Naive thymus-derived CD4-positive, alpha-beta T cell (primary cell): ENCODE measurements at regions of chr7 and their contacts with region 1.

Region 1: GRCh38 chr7:74355091-74355490 is 65.9 kb downstream of the CLIP2 start:
- DNase-seq: no peak
- ATAC-seq: no peak
- H3K4me3 ChIP-seq: no peak overlapping the region
- H3K4me3 Mint-ChIP-seq: no peak overlapping the region
- H3K27ac ChIP-seq: no peak overlapping the region
- H3K27ac Mint-ChIP-seq: no peak overlapping the region
- H3K4me1 ChIP-seq: no peaks in the 10 kb centered on the region
- H3K4me1 Mint-ChIP-seq: no peaks in the 10 kb centered on the region
- H3K27me3 ChIP-seq: no peaks in the 10 kb centered on the region
- H3K27me3 Mint-ChIP-seq: no peaks in the 10 kb centered on the region

Region 2: GRCh38 chr7:74306730-74307469 is 48.2 kb before region 1 on chr7:
- CTCF ChIA-PET with region 1: no interaction called
- POLR2A ChIA-PET with region 1: no interaction called
- intact Hi-C with region 1: loop called in 1 of 2 experiments (anchors 10 kb)
- DNase-seq: no peak
- ATAC-seq: no peak
- H3K4me3 ChIP-seq: no peak overlapping the region
- H3K4me3 Mint-ChIP-seq: peak overlapping the region; percentile 12 to 77 (median 57)
- H3K27ac ChIP-seq: no peak overlapping the region
- H3K27ac Mint-ChIP-seq: peak overlapping the region in 1 of 9 donors; percentile 31
- H3K4me1 ChIP-seq: peaks cover 3 to 13% of the 10 kb centered on the region in 2 donors
- H3K4me1 Mint-ChIP-seq: peaks cover 6 to 12% (median 11%) of the 10 kb centered on the region in 7 donors
- H3K27me3 ChIP-seq: no peaks in the 10 kb centered on the region
- H3K27me3 Mint-ChIP-seq: peaks cover 11 to 30% (median 15%) of the 10 kb centered on the region in 5 donors